ENCODE measurements at regions of chr4 and their contacts with region 1.

Region 1: DNA sequence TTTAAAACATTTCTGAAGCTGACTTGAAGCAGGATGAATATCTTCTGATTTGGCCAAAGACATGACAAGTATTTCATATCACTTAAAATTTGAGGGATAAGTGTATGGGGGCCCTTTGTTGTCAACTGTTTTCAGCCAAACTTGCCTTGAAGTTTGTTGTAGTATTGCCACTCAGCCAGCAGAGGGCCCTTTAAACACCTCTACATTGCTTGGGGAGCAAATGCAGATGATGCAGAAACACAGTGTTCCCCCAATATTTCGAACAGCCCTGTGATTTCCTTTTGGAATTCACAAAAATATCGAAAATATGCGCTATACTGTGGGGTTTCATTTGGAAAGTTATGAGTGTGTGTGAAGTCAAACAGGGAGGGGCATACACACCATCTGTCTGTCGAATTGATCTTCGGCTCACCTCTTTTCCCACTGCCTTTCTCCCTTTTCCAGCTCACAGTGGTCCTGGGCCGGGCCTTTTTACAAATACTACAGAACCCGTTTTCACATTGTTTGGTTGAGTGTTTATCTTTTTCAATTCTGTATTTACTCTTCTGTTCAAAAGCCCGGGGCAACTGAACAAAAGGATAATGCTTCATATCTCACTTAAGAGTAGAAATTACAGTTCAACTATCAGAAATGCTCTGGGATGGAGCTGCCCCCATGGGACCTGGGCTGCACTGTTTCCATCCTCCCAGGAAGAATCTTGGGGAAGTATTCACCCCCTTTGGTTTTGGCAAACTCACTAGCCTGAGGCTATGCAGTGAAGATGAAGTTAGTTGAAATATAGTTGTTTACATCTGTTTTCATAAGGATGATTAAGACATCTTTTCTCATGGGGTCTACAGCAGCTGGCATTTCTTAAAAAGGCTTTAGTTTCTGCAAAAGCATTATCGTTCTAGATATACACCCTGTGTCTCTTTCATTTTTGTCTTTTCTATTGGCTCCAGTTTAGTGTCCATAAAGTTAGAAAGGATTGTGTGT is 137.6 kb downstream of the EGF start:
- DNase-seq: peak; percentile 46 to 69 (median 63)
- H3K4me3 ChIP-seq: no peak overlapping the region
- H3K27ac ChIP-seq: no peak overlapping the region
- H3K4me1 ChIP-seq: peaks cover 0 to 7% (median 2%) of the 10 kb centered on the region in 4 experiments
- H3K27me3 ChIP-seq: no peaks in the 10 kb centered on the region

Region 2: DNA sequence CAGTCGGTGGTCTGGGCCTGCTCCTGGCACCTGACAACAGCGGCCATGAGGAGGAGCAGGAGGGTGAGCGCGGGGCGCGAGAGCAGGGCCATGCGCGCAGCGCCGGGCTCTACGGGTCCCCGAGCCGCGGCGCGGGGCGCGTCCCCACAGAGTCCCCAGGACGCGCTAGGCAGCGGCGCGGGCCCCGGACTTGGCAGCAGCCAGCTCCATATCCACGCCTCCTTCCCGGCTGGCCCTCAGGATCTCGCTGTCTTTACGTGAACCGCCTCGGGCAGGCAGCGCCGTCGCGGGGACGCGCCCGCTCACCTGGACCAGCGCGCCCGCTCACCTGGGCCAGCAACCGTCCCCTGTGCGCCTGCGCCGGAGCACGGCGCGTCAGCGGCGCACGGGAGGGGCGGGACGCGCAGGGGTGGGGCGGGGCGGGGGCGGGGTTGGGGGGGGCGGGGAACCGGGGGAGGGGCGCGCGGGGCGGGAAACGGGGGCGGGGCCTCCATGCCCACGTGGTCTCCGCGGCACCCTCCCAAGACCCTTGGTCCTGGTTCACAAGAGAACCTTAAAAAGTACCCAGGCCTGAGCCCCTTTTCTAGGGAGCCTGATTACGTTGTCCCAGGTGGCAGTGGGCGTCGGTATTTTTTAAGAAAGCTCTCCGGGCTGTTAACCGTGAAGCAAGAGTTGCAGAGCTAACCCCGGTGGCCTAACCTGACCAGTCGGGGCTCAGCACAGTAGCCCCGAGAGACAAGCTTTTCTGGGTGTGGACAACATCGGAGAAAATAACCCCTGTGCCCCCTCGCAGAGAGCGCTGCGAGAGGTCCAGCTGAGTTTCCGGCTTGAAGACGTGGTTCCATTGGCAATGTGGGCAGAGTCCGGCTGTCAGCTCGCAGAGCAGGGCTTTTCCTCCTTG is 320.3 kb before region 1 on chr4 and contains the start of gene PLA2G12A:
- CTCF ChIA-PET with region 1: no interaction called
- POLR2A ChIA-PET with region 1: no interaction called
- DNase-seq: peak; percentile 75 to 89 (median 84)
- H3K4me3 ChIP-seq: peak within 1 kb of the TSS; percentile 76 to 95 (median 88)
- H3K27ac ChIP-seq: peak within 1 kb of the TSS in 1 of 2 experiments; percentile 67
- H3K4me1 ChIP-seq: peaks cover 3 to 26% (median 19%) of the 10 kb centered on the region in 4 experiments
- H3K27me3 ChIP-seq: no peaks in the 10 kb centered on the region

Region 3: GRCh38 chr4:110020139-110020538 is 30.1 kb before region 1 on chr4:
- CTCF ChIA-PET with region 1: interaction called, 10 read pairs
- POLR2A ChIA-PET with region 1: no interaction called
- DNase-seq: no peak
- H3K4me3 ChIP-seq: no peak overlapping the region
- H3K27ac ChIP-seq: no peak overlapping the region
- H3K4me1 ChIP-seq: no peaks in the 10 kb centered on the region
- H3K27me3 ChIP-seq: no peaks in the 10 kb centered on the region

Region 4: DNA sequence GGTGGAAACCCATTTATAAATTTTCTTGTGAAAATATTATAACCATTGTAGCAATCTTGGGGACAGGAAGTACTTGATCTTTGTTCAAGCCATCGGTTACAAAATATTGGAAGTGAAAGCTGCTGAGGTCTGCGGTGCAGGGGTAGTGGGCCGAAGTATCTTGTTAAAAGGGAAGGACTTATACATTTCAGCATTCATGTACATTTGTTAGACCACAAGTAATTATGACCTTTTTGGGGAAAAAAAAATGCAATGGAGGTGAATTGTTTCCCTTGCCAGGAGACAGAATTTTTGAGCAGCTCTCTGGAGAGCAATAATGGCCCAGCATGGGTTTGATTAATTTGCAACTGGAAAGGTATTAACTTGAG is 16.2 kb before region 1 on chr4:
- CTCF ChIA-PET with region 1: interaction called, 23 read pairs
- POLR2A ChIA-PET with region 1: no interaction called
- DNase-seq: peak; percentile 48 to 86 (median 84)
- H3K4me3 ChIP-seq: peak overlapping the region in 2 of 7 experiments; percentile 22 to 32
- H3K27ac ChIP-seq: no peak overlapping the region
- H3K4me1 ChIP-seq: peaks cover 11 to 51% (median 33%) of the 10 kb centered on the region in 4 experiments
- H3K27me3 ChIP-seq: no peaks in the 10 kb centered on the region

Region 5: GRCh38 chr4:110211770-110212061 is 161.5 kb after region 1 on chr4:
- CTCF ChIA-PET with region 1: interaction called, 14 read pairs
- POLR2A ChIA-PET with region 1: no interaction called
- DNase-seq: no peak
- H3K4me3 ChIP-seq: no peak overlapping the region
- H3K27ac ChIP-seq: no peak overlapping the region
- H3K4me1 ChIP-seq: no peaks in the 10 kb centered on the region
- H3K27me3 ChIP-seq: no peaks in the 10 kb centered on the region

Region 6: GRCh38 chr4:111234939-111235338 is 1184.7 kb after region 1 on chr4:
- CTCF ChIA-PET with region 1: no interaction called
- POLR2A ChIA-PET with region 1: no interaction called
- DNase-seq: no peak
- H3K4me3 ChIP-seq: no peak overlapping the region
- H3K27ac ChIP-seq: no peak overlapping the region
- H3K4me1 ChIP-seq: no peaks in the 10 kb centered on the region
- H3K27me3 ChIP-seq: no peaks in the 10 kb centered on the region

Measured in common myeloid progenitor, CD34-positive (primary cell).